PC-9 (cell line): ENCODE measurements at regions of chr5 and their contacts with region 1.

Region 1: DNA sequence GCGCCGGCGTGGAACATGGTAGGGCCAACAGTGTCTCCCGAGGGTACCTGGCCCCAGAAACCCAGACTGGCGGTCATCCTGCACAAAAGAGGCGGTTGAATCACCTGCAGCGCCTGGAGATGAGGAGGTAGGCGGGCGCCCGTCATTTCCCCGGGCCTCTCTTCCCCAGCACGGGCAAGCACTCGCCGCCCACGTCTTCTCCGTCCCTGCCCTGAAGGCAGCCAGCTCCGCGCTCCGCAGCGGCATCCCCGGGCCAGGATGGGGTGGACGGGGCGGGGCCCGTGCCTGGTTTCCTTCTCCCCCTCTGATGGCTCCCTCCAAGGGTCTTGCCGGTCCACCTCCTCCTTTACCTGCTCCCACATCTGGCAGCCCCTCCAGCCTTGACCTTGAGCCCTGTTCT is 27.1 kb upstream of the N4BP3 start:
- DNase-seq: no peak
- H3K4me3 ChIP-seq: no peak overlapping the region
- H3K27ac ChIP-seq: no peak overlapping the region
- H3K4me1 ChIP-seq: peaks cover 40% of the 10 kb centered on the region
- H3K27me3 ChIP-seq: no peaks in the 10 kb centered on the region
- CTCF ChIP-seq: no peak

Region 2: GRCh38 chr5:178069909-178070308 is 16.4 kb before region 1 on chr5:
- CTCF ChIA-PET with region 1: interaction called, 10 read pairs
- POLR2A ChIA-PET with region 1: no interaction called
- intact Hi-C with region 1: no loop called
- DNase-seq: peak in 1 of 2 experiments; percentile 43
- H3K4me3 ChIP-seq: no peak overlapping the region
- H3K27ac ChIP-seq: no peak overlapping the region
- H3K4me1 ChIP-seq: no peaks in the 10 kb centered on the region
- H3K27me3 ChIP-seq: peaks cover 45% of the 10 kb centered on the region
- CTCF ChIP-seq: peak; percentile 26; the same call in 1 of the 2 replicates

Region 3: GRCh38 chr5:178104492-178104891 is 18.2 kb after region 1 on chr5:
- CTCF ChIA-PET with region 1: interaction called, 12 read pairs
- POLR2A ChIA-PET with region 1: no interaction called
- intact Hi-C with region 1: no loop called
- DNase-seq: peak; percentile 49 to 67
- H3K4me3 ChIP-seq: no peak overlapping the region
- H3K27ac ChIP-seq: no peak overlapping the region
- H3K4me1 ChIP-seq: peaks cover 60% of the 10 kb centered on the region
- H3K27me3 ChIP-seq: no peaks in the 10 kb centered on the region
- CTCF ChIP-seq: no peak

Region 4: DNA sequence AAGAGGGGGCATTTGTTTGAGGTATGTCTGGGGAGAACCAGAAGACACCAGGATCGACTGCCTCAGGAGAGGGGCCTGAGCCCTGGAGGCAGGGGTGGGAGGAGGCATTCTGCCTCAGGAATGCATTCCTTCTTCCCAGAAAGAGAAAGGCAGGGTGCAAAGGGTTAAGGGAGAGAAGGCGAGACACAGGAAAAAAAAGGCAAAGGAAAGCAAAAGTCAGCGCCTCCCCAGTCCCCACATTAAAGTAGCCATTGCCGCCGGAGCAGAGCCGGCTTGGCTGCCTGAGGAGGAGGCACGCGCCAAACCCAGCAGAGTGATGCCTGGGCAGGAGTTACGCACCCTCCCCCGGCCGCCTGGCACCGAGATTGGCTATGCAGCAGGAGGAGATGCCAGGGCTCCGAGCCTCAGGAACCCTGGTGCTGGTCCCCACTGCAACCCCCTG is 270.2 kb after region 1 on chr5:
- CTCF ChIA-PET with region 1: no interaction called
- POLR2A ChIA-PET with region 1: no interaction called
- intact Hi-C with region 1: no loop called
- DNase-seq: no peak
- H3K4me3 ChIP-seq: no peak overlapping the region
- H3K27ac ChIP-seq: no peak overlapping the region
- H3K4me1 ChIP-seq: no peaks in the 10 kb centered on the region
- H3K27me3 ChIP-seq: peaks cover 87% of the 10 kb centered on the region
- CTCF ChIP-seq: no peak